Transverse colon (tissue), 4 donors: ENCODE measurements at regions of chr11 and their contacts with region 1.

Region 1: GRCh38 chr11:47296045-47296444 is 26.1 kb downstream of the MADD start:
- DNase-seq: no peak
- H3K4me3 ChIP-seq: no peak overlapping the region
- H3K27ac ChIP-seq: no peak overlapping the region
- H3K4me1 ChIP-seq: no peaks in the 10 kb centered on the region
- H3K27me3 ChIP-seq: no peaks in the 10 kb centered on the region
- CTCF ChIP-seq: no peak
- EP300 ChIP-seq: no peak
- POLR2A ChIP-seq: no peak

Region 2: DNA sequence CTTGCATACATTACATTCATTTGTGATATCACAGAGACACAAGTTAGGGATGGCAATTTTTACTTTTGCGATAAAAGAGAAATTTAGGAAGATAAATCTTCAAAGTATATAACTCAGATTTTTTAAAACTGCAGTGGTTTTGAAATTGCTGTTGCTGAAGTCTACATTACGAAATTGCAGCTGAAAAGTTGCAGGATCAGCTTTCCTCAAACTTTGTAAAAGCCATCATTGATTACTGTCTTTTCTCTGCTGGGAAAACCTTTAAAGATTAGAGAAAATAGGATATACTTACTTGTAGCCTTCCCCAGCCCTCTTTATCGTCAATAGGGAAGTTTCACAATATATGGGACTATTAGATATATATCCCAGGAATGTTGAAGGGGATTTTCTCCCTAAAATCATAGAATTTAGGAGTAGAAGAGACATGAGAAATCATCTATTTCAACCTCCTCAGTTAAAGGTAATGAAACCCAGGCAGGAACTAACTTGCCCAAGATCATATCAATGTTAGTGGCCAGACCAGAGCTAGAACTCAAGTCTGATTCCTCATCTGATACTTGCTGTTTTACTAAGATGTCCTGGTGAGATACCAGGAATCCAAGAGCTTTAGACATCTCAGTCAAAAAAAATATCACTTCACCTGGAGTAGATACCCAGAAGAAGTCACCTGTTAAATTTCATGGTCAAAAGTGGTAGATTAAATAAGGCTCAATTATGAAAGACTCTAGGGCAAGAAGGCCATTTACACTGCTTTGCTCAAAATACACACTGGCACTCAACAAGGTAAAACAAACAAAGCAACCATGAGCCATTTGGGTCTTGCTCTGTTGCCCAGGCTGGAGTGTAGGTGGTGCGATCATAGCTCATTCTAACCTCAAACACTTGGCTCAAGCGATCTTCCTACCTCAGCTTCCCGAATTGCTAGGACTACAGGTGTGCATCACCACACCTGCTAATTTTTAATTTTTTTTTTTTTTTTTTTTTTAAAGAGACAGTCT is 429.7 kb after region 1 on chr11:
- in situ Hi-C with region 1: loop called in 1 of 4 experiments (anchors 25 kb)
- intact Hi-C with region 1: no loop called
- DNase-seq: no peak
- H3K4me3 ChIP-seq: no peak overlapping the region
- H3K27ac ChIP-seq: peak overlapping the region in 1 of 4 donors; percentile 3
- H3K4me1 ChIP-seq: peaks cover 0 to 25% (median 7%) of the 10 kb centered on the region in 4 donors
- H3K27me3 ChIP-seq: no peaks in the 10 kb centered on the region
- CTCF ChIP-seq: no peak
- EP300 ChIP-seq: no peak
- POLR2A ChIP-seq: no peak